KBM-7 (cell line): ENCODE measurements at regions of chr4 and their contacts with region 1.

Region 1: DNA sequence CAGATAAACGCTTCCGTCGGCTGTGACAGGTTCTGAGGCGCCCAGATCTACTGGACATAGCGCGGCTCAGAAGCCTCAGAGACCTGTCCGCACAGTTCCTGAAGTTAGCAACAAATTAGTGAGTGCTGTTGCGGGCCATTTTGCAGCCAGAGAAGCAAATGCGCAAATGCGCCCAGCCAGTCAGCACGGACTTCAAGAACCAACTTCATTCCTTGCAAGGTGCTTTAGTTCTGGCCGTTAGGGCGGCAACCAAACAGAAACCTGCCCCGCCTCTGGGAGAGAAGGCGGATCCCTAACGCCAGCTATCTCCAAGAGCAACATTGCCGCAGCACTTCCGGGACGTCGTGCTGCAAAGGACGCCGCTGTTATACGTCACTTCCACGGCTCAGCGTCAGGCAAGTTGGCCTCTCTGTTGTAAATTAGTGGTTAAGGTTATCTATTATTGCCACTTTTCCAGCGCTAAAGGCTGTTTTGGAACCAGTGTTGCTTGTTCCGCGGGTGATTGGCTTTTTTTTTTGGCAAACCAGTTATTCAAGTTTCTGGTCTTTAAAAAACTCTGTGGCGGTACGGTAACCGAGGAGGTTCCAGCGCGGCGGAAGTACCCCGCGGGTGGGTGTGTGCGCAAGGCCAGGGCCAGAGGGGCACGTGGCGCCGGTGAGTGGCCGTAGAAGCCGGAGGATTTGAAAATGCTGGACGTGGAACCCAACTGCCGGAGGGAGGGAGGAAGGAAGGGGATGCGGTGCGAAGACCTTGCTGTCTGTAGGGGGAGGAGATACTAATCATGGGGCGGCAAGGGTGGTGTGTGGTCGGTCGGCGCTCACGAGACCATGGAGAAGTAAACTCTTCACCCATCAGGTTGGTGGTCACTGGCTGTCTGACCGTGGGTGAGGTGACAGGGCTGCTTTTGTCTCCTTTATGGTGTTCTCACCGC is at the start of gene GAR1:
- DNase-seq: peak; percentile 95

Region 2: GRCh38 chr4:109424093-109424841 is 391.1 kb before region 1 on chr4:
- in situ Hi-C with region 1: loop called (anchors 10 kb)
- DNase-seq: no peak

Region 3: GRCh38 chr4:109998867-109999584 is 183.6 kb after region 1 on chr4:
- in situ Hi-C with region 1: no loop called
- DNase-seq: peak; percentile 71